GM18951 (cell line): ENCODE measurements at regions of chr10 and their contacts with region 1.

Region 1: GRCh38 chr10:52488606-52489485 is 174.8 kb downstream of the DKK1 start:
- POLR2A ChIP-seq: no peak

Region 2: GRCh38 chr10:52308251-52309031 is 180.4 kb before region 1 on chr10:
- in situ Hi-C with region 1: loop called (anchors 25 kb)
- POLR2A ChIP-seq: no peak

Region 3: DNA sequence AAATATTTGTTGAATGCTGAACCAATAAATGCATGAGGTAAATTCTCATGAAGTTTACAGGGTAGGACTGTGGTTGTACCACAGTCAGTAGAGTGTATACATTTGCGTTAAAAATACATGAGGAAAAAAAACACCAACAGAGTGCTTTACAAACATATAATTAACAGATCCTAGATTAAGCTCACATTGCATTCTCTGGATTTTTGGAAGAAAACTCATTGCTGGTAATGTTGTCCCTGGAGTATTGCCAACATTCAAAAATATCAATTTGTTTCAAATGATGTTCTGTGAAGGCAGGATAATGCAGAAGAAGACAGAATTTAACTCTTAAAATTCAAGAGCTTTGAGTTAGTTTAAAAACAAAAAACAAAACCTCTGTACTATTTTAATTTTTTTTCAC is 188.2 kb after region 1 on chr10:
- in situ Hi-C with region 1: no loop called
- POLR2A ChIP-seq: no peak

Region 4: DNA sequence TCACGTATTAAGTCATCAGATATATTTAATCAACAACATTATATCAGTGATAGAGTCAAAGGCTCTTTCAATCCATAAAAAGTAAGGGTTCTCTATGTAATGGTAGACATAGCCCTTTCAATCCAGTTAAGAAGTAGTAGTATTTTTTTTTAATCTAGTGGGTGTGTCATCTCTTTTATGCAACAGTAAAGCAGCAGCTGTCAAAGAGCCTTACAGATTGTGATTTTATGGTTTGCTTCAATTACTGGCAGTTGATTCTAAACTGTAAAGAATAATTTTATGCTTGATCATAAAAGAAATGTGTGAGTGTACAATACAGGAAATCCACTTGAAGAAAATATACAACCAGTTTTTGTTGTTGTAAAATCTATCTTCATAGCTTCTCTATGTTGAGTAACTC is 1186.3 kb after region 1 on chr10:
- in situ Hi-C with region 1: no loop called
- POLR2A ChIP-seq: no peak